ENCODE measurements at regions of chr14 and their contacts with region 1.

Region 1: GRCh38 chr14:23120541-23121251 is 1.6 kb upstream of the CEBPE start:
- DNase-seq: peak; percentile 90
- H3K4me3 Mint-ChIP-seq: peak overlapping the region; percentile 9
- H3K27ac Mint-ChIP-seq: peak overlapping the region; percentile 58
- H3K4me1 Mint-ChIP-seq: peaks cover 32% of the 10 kb centered on the region
- H3K27me3 Mint-ChIP-seq: no peaks in the 10 kb centered on the region

Region 2: DNA sequence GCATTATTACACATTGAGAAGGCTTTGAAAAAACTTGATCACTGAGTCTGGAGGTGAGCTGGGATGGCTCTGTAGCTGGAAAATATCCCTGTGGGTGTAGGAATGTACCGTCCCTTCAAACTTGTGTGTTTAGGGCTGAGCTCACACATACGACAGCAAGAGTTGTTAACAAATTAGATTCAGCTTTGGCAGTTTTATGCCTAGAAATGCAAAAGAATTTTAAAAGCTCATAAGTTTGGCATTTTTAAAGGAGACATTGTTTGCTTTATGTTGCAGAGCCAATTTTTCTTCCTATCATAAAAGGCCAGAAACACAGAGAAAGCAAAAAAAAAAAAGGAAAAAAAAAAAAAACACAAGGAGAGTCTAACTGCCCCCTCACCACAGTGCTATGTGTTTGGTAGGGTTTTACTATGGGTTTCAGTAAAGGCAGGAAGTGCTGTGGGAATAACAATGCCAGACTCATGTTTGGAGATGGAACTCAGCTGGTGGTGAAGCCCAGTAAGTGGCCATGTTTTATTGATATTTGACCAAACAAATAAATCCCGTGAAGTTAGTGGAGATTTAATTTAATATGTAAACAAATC is 610.1 kb before region 1 on chr14:
- CTCF ChIA-PET with region 1: no interaction called
- POLR2A ChIA-PET with region 1: no interaction called
- intact Hi-C with region 1: no loop called
- DNase-seq: no peak
- H3K4me3 Mint-ChIP-seq: peak overlapping the region; percentile 79
- H3K27ac Mint-ChIP-seq: peak overlapping the region; percentile 98
- H3K4me1 Mint-ChIP-seq: peaks cover 57% of the 10 kb centered on the region
- H3K27me3 Mint-ChIP-seq: no peaks in the 10 kb centered on the region

Region 3: DNA sequence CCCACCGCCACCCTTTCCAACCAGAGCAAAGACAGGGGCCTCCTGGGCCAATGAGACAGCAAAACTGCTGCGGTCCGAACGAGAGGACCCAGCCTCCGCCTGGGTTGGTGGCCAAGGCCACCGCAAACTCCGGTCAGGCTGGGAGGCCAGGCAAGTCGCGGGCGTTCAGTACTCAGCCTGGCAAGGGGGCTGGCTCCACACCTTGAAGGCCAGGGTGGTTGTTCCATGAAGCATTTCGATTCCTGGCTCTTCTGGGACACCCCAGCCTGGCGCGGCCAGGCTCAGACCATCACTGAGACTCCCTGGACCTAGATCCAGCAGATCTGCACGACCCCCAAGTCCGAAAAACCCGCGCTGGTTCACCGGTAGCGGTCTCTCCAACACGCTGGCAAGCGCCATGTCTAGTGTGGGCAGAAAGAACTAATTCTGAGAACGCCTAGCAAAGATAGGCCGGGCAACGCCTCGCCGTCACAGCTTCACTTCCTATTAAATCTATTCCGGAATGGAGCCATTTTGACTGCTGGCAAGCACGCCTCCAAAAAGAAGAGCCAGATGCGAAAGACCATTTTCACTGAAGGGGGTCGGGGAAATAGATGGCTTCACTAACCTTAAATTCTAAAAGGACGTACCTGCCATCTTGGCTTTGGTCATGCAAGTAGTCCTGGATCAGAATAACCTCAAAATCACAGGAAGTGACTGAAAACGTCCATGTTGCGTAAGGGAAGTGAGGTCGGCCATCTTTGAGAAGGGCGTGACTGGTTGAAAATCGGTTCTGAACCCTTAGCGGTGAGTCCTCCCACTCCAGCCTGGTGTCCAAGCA is 86.0 kb before region 1 on chr14 and contains the start of gene PSMB5:
- CTCF ChIA-PET with region 1: no interaction called
- POLR2A ChIA-PET with region 1: no interaction called
- intact Hi-C with region 1: no loop called
- DNase-seq: peak; percentile 94
- H3K4me3 Mint-ChIP-seq: peak within 1 kb of the TSS; percentile 95
- H3K27ac Mint-ChIP-seq: peak within 1 kb of the TSS; percentile 95
- H3K4me1 Mint-ChIP-seq: peaks cover 28% of the 10 kb centered on the region
- H3K27me3 Mint-ChIP-seq: no peaks in the 10 kb centered on the region
- total RNA-seq, gene PSMB5: 116 to 119 TPM

Region 4: DNA sequence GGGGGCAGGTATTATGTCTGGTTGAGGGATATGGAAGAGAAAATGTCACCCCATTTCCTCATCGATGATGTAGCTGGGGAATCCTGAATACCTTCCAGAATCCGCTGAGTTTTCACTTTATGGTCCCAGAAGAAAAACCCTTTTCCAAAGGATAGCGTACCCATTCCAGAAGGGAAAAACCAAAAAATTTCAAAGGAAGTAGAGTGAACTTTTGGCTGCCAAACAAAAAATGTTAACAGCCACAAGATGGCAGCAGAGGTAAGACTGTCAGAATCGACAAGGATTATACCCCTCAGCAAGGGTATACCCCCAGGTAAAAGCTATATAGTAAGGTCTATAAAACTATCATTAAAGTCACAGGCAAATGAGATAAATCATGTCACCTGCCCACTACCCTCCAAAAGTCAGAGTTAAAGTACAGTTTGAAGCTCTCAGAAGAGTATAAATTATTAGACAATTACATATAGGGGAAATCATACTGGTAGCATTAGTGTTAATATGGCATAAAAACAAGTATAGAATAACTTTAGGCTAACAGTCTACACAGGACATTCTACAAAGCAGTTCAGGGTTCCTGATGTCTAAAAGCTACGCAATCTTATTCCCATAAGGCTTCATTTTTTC is 43.8 kb before region 1 on chr14:
- CTCF ChIA-PET with region 1: interaction called, 62 read pairs
- POLR2A ChIA-PET with region 1: no interaction called
- intact Hi-C with region 1: no loop called
- DNase-seq: no peak
- H3K4me3 Mint-ChIP-seq: no peak overlapping the region
- H3K27ac Mint-ChIP-seq: no peak overlapping the region
- H3K4me1 Mint-ChIP-seq: peaks cover 7% of the 10 kb centered on the region
- H3K27me3 Mint-ChIP-seq: no peaks in the 10 kb centered on the region

Region 5: DNA sequence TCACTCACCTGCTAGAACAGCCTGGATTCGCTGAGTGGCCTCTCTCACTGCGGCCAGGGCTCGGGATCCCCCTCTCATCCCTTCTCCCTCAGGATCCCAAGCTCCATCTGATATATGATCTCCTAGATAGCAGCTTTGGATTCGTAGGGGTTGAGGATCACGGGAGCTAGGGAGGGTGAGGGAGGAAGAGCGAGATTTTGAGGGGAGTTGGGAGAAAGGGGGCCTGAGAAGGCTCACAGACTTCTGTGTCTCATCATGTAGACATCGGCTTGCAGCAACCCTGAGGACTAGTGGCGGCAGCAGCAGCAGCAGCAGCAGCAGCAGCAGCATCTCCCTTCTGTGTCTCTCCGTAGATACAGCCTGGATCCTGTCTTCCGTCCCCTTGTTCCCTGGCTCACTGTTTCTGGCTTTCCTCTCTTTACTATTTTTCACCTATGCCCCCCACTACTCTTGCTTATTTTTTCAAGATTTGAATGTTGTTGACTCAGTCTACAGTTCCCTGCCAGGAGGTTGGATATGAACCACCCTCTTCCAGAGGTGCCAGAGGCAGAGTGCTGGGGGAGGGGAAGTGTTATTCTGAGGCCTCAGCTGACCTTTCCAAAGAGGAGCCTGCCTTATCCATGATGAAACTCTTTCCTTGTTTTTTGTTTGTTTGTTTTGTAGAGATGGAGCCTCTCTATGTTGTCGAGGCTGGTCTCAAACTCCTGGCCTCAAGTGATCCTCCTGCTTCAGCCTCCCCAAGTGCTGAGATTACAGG is 15.9 kb before region 1 on chr14 and contains the start of gene CIROP:
- CTCF ChIA-PET with region 1: interaction called, 43 read pairs
- POLR2A ChIA-PET with region 1: no interaction called
- intact Hi-C with region 1: no loop called
- DNase-seq: no peak
- H3K4me3 Mint-ChIP-seq: no peak within 1 kb of the TSS
- H3K27ac Mint-ChIP-seq: no peak within 1 kb of the TSS
- H3K4me1 Mint-ChIP-seq: no peaks in the 10 kb centered on the region
- H3K27me3 Mint-ChIP-seq: no peaks in the 10 kb centered on the region
- total RNA-seq, gene CIROP: not detected

Region 6: DNA sequence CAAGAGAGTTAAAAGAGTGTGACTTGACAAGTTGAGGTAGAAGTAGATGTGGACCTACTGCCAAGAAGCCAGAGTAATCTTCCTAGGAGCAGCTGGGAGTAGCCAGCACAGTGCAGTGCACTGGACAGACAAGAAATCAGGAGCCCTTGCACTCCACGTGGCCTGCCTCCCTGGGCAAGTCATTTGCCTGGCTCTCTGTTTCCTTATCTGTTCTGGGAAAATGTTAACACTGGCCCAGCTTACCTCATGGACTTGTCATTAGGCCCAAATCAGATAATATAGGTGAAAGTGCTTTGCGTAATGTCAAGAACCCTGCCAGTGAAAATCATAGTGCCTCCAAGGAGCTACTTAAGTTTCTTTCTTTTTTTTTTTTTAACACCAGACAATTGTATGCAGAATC is 43.6 kb after region 1 on chr14:
- CTCF ChIA-PET with region 1: interaction called, 10 read pairs
- POLR2A ChIA-PET with region 1: no interaction called
- intact Hi-C with region 1: no loop called
- DNase-seq: no peak
- H3K4me3 Mint-ChIP-seq: no peak overlapping the region
- H3K27ac Mint-ChIP-seq: no peak overlapping the region
- H3K4me1 Mint-ChIP-seq: peaks cover 17% of the 10 kb centered on the region
- H3K27me3 Mint-ChIP-seq: peaks cover 5% of the 10 kb centered on the region

Region 7: DNA sequence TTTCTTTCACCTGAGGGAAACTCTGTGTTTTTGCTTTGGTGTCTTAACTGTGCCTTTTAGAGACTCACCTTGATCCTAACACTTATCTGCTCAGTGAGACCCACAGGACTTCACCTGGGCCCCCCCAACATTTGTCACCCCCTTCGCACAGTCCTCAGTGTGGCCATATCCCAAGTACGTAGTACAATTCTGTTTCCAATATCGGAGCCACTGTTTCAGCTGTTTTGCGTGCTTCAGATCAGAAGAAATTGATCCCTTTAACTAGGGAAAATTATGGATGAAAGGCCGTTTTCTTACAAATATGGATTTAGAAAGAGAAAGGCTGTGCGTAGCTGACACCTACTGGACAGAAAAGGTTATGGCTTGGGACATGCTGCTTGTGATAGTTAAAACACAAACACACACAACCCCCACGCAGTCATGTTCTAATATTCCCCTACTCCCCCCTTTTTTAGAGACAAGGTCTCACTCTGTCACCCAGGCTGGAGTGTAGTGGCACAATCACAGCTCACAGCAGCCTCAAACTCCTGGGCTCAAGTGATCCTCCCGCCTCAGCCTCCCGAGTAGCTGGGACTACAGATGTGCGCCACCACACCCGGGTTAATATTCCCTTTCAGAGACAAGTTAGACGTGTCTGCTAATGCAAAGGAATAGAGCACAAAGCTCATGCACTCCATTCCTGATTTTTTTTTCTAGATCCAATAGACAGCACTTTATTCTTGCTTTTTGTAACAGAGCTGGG is 66.4 kb after region 1 on chr14:
- CTCF ChIA-PET with region 1: interaction called, 223 read pairs
- POLR2A ChIA-PET with region 1: no interaction called
- intact Hi-C with region 1: loop called (anchors 1 kb)
- DNase-seq: peak; percentile 34
- H3K4me3 Mint-ChIP-seq: no peak overlapping the region
- H3K27ac Mint-ChIP-seq: no peak overlapping the region
- H3K4me1 Mint-ChIP-seq: no peaks in the 10 kb centered on the region
- H3K27me3 Mint-ChIP-seq: no peaks in the 10 kb centered on the region

Region 8: GRCh38 chr14:23294734-23295561 is 174.3 kb after region 1 on chr14:
- CTCF ChIA-PET with region 1: interaction called, 32 read pairs
- POLR2A ChIA-PET with region 1: no interaction called
- intact Hi-C with region 1: loop called (anchors 1 kb)
- DNase-seq: peak; percentile 62
- H3K4me3 Mint-ChIP-seq: no peak overlapping the region
- H3K27ac Mint-ChIP-seq: peak overlapping the region; percentile 29
- H3K4me1 Mint-ChIP-seq: peaks cover 21% of the 10 kb centered on the region
- H3K27me3 Mint-ChIP-seq: no peaks in the 10 kb centered on the region

Region 9: GRCh38 chr14:23320774-23321571 is 200.3 kb after region 1 on chr14 and contains the start of gene PABPN1:
- CTCF ChIA-PET with region 1: interaction called, 25 read pairs
- POLR2A ChIA-PET with region 1: interaction called, 9 read pairs
- intact Hi-C with region 1: no loop called
- DNase-seq: peak; percentile 99
- H3K4me3 Mint-ChIP-seq: peak within 1 kb of the TSS; percentile 92
- H3K27ac Mint-ChIP-seq: peak within 1 kb of the TSS; percentile 90
- H3K4me1 Mint-ChIP-seq: peaks cover 23% of the 10 kb centered on the region
- H3K27me3 Mint-ChIP-seq: no peaks in the 10 kb centered on the region
- total RNA-seq, gene PABPN1: 198 to 209 TPM

Measured in activated CD4-positive, alpha-beta memory T cell treated with anti-CD3 and anti-CD28 coated beads for 36 hours (primary cell).